ENCODE measurements at regions of chr1 and their contacts with region 1.

Region 1: DNA sequence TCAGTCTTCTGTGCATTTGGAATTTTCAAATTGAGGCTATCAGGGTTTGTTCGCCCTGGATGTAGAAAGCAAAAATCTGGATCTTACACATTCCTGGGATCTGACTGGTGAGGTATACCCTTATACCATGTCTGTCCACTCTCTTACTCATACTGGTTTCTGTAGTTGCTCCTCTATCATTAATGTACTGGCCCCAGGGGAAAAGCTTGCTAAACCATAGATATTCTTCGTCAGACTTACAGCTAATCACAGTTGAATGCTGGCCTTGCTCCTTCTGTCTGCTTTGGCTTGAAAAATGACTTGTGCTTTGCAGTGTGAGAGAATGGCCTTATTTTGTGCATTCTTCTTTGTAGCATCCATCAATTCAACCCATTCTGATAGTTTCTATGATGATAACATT is 30.5 kb downstream of the TBCE start:
- DNase-seq: no peak
- ATAC-seq: no peak
- H3K4me3 Mint-ChIP-seq: no peak overlapping the region
- H3K27ac Mint-ChIP-seq: no peak overlapping the region; the same call in 1 of the 2 replicates
- H3K4me1 Mint-ChIP-seq: peaks cover 9% of the 10 kb centered on the region
- H3K27me3 Mint-ChIP-seq: no peaks in the 10 kb centered on the region
- CTCF ChIP-seq: no peak

Region 2: GRCh38 chr1:235180916-235181460 is 216.7 kb before region 1 on chr1:
- CTCF ChIA-PET with region 1: no interaction called
- POLR2A ChIA-PET with region 1: interaction called, 10 read pairs
- DNase-seq: no peak
- ATAC-seq: no peak
- H3K4me3 Mint-ChIP-seq: no peak overlapping the region
- H3K27ac Mint-ChIP-seq: no peak overlapping the region
- H3K4me1 Mint-ChIP-seq: no peaks in the 10 kb centered on the region
- H3K27me3 Mint-ChIP-seq: no peaks in the 10 kb centered on the region
- CTCF ChIP-seq: no peak

Region 3: GRCh38 chr1:235423191-235423652 is 25.5 kb after region 1 on chr1:
- CTCF ChIA-PET with region 1: no interaction called
- POLR2A ChIA-PET with region 1: no interaction called
- DNase-seq: no peak
- ATAC-seq: peak; percentile 78
- H3K4me3 Mint-ChIP-seq: no peak overlapping the region
- H3K27ac Mint-ChIP-seq: peak overlapping the region; percentile 37
- H3K4me1 Mint-ChIP-seq: peaks cover 10% of the 10 kb centered on the region
- H3K27me3 Mint-ChIP-seq: no peaks in the 10 kb centered on the region
- CTCF ChIP-seq: no peak

Measured in WTC11 (cell line).